ENCODE measurements at regions of chr10 and their contacts with region 1.

Region 1: GRCh38 chr10:119542988-119543813 is 682 bp upstream of the RGS10 start:
- DNase-seq: peak; percentile 82
- H3K4me3 ChIP-seq: peak overlapping the region; percentile 73 to 96 (median 82)
- H3K27ac ChIP-seq: peak overlapping the region; percentile 78 to 97 (median 89)
- H3K4me1 ChIP-seq: peaks cover 0 to 66% (median 64%) of the 10 kb centered on the region in 4 donors
- H3K27me3 ChIP-seq: no peaks in the 10 kb centered on the region
- CTCF ChIP-seq: peak; percentile 26 to 53 (median 48)
- EP300 ChIP-seq: no peak
- POLR2A ChIP-seq: no peak

Region 2: GRCh38 chr10:119650692-119651513 is 107.7 kb after region 1 on chr10 and contains the start of gene BAG3:
- intact Hi-C with region 1: loop called (anchors 5 kb)
- DNase-seq: peak; percentile 98
- H3K4me3 ChIP-seq: peak within 1 kb of the TSS; percentile 94 to 99 (median 96)
- H3K27ac ChIP-seq: peak within 1 kb of the TSS; percentile 98 to 100 (median 99)
- H3K4me1 ChIP-seq: peaks cover 0 to 37% (median 29%) of the 10 kb centered on the region in 4 donors
- H3K27me3 ChIP-seq: no peaks in the 10 kb centered on the region
- CTCF ChIP-seq: no peak
- EP300 ChIP-seq: no peak
- POLR2A ChIP-seq: peak; percentile 71 to 81
- total RNA-seq, gene BAG3: 32.9 to 62.4 (median 43.9) TPM

Region 3: DNA sequence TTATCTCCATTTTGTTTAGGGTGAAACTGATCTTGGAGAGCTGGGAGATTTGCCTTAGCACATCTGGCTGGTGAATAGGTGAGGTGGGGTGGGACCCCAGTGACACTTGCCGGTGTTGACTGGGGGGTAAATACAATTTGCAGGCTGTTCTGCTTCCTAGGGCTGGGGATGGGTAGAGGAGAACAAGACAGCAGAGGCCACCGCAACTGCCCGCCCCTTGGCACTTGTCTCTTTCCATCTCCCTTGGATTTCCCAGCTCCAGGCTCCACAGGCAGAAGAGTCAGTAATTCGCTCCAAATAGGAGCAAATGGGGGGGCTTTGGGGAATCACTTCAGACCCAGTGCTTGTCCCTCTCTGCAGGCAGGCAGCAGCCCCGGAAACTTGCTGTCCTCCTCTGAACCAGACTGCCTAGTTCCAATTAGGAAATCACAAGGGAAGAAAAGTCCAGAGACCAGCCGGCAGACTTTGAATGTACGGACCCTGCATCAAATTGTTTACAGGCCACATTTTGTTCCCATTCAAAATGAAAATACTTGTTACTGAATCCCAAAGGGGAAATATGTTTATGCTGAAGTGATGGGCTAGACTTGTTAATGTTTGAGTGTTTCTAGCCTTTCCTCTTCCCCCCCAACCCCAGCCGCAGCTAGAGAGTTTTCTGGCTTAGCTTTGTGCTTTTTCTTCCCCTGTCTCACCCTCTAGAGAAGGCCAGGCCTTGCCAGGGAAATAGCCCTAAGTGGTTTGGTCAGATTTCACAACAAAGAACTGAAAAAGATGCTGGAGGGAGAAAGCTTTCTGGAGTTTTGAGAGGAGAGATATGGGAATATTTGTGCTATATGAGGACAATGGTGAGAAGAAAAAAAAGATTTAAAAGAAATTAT is 172.7 kb after region 1 on chr10:
- intact Hi-C with region 1: no loop called
- DNase-seq: no peak
- H3K4me3 ChIP-seq: no peak overlapping the region
- H3K27ac ChIP-seq: peak overlapping the region; percentile 6 to 45 (median 24)
- H3K4me1 ChIP-seq: peaks cover 0 to 9% (median 3%) of the 10 kb centered on the region in 4 donors
- H3K27me3 ChIP-seq: no peaks in the 10 kb centered on the region
- CTCF ChIP-seq: no peak
- EP300 ChIP-seq: no peak
- POLR2A ChIP-seq: no peak

Measured in sigmoid colon (tissue), 7 donors.